WTC11 (cell line): ENCODE measurements at regions of chr12 and their contacts with region 1.

Region 1: GRCh38 chr12:54701940-54702592 is 53.9 kb upstream of the DCD start:
- DNase-seq: no peak
- ATAC-seq: peak; percentile 69
- H3K4me3 Mint-ChIP-seq: no peak overlapping the region
- H3K27ac Mint-ChIP-seq: no peak overlapping the region
- H3K4me1 Mint-ChIP-seq: peaks cover 22% of the 10 kb centered on the region
- H3K27me3 Mint-ChIP-seq: no peaks in the 10 kb centered on the region
- CTCF ChIP-seq: peak; percentile 43

Region 2: GRCh38 chr12:54680374-54680773 is 21.7 kb before region 1 on chr12:
- CTCF ChIA-PET with region 1: interaction called, 26 read pairs
- POLR2A ChIA-PET with region 1: no interaction called
- DNase-seq: peak; percentile 85
- ATAC-seq: peak; percentile 72
- H3K4me3 Mint-ChIP-seq: no peak overlapping the region
- H3K27ac Mint-ChIP-seq: no peak overlapping the region; the same call in 1 of the 2 replicates
- H3K4me1 Mint-ChIP-seq: peaks cover 88% of the 10 kb centered on the region
- H3K27me3 Mint-ChIP-seq: peaks cover 12% of the 10 kb centered on the region
- CTCF ChIP-seq: peak; percentile 86

Region 3: GRCh38 chr12:54689984-54690383 is 12.1 kb before region 1 on chr12:
- CTCF ChIA-PET with region 1: interaction called, 39 read pairs
- POLR2A ChIA-PET with region 1: no interaction called
- DNase-seq: peak; percentile 40
- ATAC-seq: peak; percentile 99
- H3K4me3 Mint-ChIP-seq: no peak overlapping the region
- H3K27ac Mint-ChIP-seq: no peak overlapping the region
- H3K4me1 Mint-ChIP-seq: peaks cover 20% of the 10 kb centered on the region
- H3K27me3 Mint-ChIP-seq: peaks cover 24% of the 10 kb centered on the region
- CTCF ChIP-seq: no peak

Region 4: GRCh38 chr12:54723379-54724256 is 21.6 kb after region 1 on chr12:
- CTCF ChIA-PET with region 1: interaction called, 20 read pairs
- POLR2A ChIA-PET with region 1: no interaction called
- DNase-seq: no peak
- ATAC-seq: peak; percentile 51
- H3K4me3 Mint-ChIP-seq: no peak overlapping the region
- H3K27ac Mint-ChIP-seq: no peak overlapping the region
- H3K4me1 Mint-ChIP-seq: peaks cover 41% of the 10 kb centered on the region
- H3K27me3 Mint-ChIP-seq: no peaks in the 10 kb centered on the region
- CTCF ChIP-seq: peak; percentile 53

Region 5: DNA sequence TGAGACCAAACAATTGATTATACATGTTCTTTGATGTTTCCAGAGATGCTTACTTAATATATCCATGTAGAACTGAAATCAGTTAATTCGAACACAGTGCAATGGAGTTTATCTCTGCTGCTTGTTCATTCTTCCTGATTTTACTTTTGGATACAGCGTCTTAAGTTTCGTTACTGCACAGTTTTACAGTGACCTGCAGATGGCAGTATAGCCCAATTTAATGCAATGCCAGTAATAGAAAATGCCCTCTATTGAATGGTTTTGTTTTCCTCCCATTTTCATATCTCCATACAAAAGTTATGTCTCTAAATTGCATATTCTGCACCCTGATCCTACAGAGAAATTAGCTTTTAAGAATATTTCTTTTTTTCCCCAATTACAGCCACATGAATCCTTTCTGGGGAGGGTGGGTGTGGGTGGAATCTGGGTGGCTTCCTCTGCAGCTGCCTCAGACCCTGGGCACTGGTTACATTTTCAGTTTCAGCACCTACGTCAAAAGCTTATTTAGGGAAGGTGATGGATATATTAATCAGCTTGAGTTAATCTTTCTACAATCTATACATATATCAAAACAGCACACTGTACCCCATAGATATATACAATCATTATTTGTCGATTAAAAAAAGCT is 47.2 kb after region 1 on chr12:
- CTCF ChIA-PET with region 1: interaction called, 17 read pairs
- POLR2A ChIA-PET with region 1: no interaction called
- DNase-seq: no peak
- ATAC-seq: peak; percentile 53; the same call in 1 of the 2 replicates
- H3K4me3 Mint-ChIP-seq: no peak overlapping the region
- H3K27ac Mint-ChIP-seq: no peak overlapping the region
- H3K4me1 Mint-ChIP-seq: no peaks in the 10 kb centered on the region
- H3K27me3 Mint-ChIP-seq: no peaks in the 10 kb centered on the region
- CTCF ChIP-seq: peak; percentile 56

Region 6: GRCh38 chr12:54773590-54773989 is 71.5 kb after region 1 on chr12:
- CTCF ChIA-PET with region 1: no interaction called
- POLR2A ChIA-PET with region 1: no interaction called
- DNase-seq: no peak
- ATAC-seq: no peak
- H3K4me3 Mint-ChIP-seq: no peak overlapping the region
- H3K27ac Mint-ChIP-seq: no peak overlapping the region
- H3K4me1 Mint-ChIP-seq: no peaks in the 10 kb centered on the region
- H3K27me3 Mint-ChIP-seq: peaks cover 17% of the 10 kb centered on the region
- CTCF ChIP-seq: no peak

Region 7: DNA sequence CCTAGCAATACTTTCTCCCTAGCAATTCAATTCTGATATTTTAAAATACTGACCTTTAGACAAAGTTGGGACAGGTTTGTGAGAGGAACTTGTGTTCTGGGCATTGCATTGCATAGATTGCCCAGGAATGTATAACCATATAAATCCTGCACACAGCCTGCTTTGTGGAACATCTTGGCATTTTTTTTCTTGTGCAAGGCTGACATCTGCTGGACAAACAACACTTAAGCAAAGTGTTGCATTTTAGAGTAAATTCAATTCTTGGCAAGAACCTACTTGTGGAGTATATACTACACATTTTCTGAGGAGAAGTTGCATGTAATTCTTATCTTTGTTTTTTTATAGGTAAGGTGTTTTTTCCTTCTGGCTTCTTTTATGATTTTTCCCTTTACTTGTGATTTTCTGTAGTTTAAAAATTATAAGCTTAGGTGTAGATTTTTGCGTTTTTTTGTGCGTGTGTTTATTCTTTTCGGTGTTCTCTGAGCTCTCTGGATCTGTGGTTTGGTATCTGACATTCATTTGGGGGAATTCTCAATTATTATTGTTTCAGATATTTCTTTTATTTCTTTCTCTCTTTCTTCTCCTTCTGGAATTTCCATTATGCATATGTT is 256.1 kb after region 1 on chr12:
- CTCF ChIA-PET with region 1: interaction called, 14 read pairs
- POLR2A ChIA-PET with region 1: no interaction called
- DNase-seq: peak; percentile 33
- ATAC-seq: no peak; the same call in 1 of the 2 replicates
- H3K4me3 Mint-ChIP-seq: no peak overlapping the region
- H3K27ac Mint-ChIP-seq: no peak overlapping the region
- H3K4me1 Mint-ChIP-seq: peaks cover 24% of the 10 kb centered on the region
- H3K27me3 Mint-ChIP-seq: peaks cover 4% of the 10 kb centered on the region; the same call in 1 of the 2 replicates
- CTCF ChIP-seq: peak; percentile 29; the same call in 1 of the 2 replicates